ENCODE measurements at regions of chr10 and their contacts with region 1.

Region 1: DNA sequence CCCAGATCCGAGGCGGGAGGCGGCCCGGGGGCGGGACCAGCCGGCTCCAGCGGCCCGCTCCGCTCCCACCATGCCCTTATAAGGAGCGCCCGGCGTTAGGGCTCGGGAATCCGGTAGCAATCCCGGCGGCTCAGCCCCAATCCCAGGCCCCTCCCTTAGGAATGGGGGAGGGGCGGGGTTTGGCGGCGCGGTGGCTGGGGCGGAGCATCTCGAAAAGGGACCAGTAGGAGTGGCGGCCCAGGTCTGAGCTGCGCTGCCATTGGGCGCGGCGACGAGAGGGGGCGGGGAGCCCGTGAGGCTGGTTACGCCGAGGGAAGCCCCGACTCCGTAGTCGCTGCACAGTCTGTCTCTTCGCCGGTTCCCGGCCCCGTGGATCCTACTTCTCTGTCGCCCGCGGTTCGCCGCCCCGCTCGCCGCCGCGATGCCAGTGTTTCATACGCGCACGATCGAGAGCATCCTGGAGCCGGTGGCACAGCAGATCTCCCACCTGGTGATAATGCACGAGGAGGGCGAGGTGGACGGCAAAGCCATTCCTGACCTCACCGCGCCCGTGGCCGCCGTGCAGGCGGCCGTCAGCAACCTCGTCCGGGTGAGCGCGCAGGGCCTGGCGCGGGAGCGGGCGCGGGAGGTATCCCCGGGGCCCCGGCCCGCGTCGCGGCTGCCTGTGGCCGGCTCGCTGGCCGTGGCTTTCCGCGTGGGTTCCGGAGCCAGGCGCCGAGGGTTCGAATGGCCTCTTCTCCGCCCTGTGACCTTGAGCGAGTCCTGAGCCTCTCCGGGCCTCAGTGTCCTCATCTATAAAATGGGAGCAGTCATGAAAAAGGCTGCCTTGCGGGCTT is at the start of gene VCL:
- DNase-seq: peak; percentile 99
- H3K4me3 ChIP-seq: peak within 1 kb of the TSS; percentile 76 to 100 (median 92)
- H3K27ac ChIP-seq: peak within 1 kb of the TSS; percentile 96 to 100 (median 98)
- H3K4me1 ChIP-seq: peaks cover 0 to 43% (median 37%) of the 10 kb centered on the region in 4 donors
- H3K27me3 ChIP-seq: no peaks in the 10 kb centered on the region
- CTCF ChIP-seq: peak in 1 of 4 experiments; percentile 18
- EP300 ChIP-seq: peak in 1 of 4 donors; percentile 4
- POLR2A ChIP-seq: peak; percentile 99 to 100
- total RNA-seq, gene VCL: 179 to 451 (median 305) TPM

Region 2: DNA sequence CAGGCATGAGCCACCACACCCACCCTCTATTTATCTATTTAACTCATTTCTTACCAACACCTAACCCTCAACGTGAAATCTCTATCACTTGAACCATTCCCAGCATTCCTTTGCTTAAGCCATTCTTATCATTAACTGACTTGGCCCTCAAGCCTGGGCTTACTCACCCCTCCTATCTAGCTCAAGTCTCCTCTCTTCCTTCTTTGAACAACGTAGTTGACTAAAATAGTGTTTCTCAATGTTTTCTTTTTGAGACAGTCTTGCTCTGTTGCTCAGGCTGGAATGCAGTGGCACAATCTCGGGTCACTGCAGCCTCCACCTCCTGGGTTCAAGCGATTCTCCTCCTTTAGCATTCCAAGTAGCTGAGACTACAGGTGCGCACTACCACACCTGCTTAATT is 591.2 kb before region 1 on chr10:
- intact Hi-C with region 1: no loop called
- DNase-seq: no peak
- H3K4me3 ChIP-seq: no peak overlapping the region
- H3K27ac ChIP-seq: no peak overlapping the region
- H3K4me1 ChIP-seq: peaks cover 0 to 13% (median 4%) of the 10 kb centered on the region in 4 donors
- H3K27me3 ChIP-seq: no peaks in the 10 kb centered on the region
- CTCF ChIP-seq: no peak
- EP300 ChIP-seq: no peak
- POLR2A ChIP-seq: no peak

Region 3: DNA sequence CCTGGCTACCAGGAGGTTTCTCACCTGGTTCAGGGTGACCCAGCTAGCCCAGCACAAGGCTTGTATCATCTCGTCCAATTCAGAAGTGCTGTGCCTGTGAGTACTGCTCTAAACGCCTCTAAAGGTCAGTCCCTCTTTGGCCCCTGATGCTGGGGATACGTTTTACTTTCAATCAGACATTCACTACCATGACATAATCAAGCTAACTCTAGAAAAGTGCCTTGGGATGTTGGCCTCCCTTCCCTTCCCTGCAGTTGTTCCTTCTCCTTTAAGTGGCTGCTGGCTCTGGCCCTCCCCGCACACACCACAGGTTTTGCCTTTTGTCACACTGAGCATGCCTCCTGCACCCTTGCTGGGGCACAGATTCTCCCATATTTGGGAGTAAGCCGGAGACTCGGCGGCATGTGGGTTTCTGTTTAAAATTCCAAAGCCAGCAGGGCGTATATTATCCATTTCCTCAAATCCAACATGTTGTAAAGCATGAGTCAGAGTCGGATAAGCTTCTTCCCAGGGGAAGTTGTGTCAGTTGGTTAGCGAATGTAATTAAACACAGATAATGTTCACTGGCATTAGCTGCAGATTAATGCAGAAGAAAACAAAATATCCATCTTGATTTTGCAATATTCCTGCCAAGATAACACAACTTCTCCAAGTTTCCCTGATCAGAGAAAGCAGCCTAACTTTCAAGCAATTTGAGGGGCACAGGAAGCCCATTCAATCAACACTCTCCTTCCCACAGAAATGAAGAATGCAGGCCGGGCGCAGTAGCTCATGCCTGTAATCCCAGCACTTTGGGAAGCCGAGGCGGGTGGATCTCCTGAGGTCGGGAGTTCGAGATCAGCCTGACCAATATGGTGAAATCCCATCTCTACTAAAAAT is 31.9 kb before region 1 on chr10:
- intact Hi-C with region 1: loop called (anchors 2 kb)
- DNase-seq: peak; percentile 97
- H3K4me3 ChIP-seq: peak overlapping the region in 1 of 4 donors; percentile 11
- H3K27ac ChIP-seq: peak overlapping the region; percentile 85 to 94 (median 90)
- H3K4me1 ChIP-seq: peaks cover 0 to 48% (median 42%) of the 10 kb centered on the region in 4 donors
- H3K27me3 ChIP-seq: no peaks in the 10 kb centered on the region
- CTCF ChIP-seq: no peak
- EP300 ChIP-seq: peak in 1 of 4 donors; percentile 84
- POLR2A ChIP-seq: peak in 1 of 2 donors; percentile 25

Measured in sigmoid colon (tissue), 7 donors.